Uterus (tissue), 4 donors: ENCODE measurements at regions of chr17 and their contacts with region 1.

Region 1: DNA sequence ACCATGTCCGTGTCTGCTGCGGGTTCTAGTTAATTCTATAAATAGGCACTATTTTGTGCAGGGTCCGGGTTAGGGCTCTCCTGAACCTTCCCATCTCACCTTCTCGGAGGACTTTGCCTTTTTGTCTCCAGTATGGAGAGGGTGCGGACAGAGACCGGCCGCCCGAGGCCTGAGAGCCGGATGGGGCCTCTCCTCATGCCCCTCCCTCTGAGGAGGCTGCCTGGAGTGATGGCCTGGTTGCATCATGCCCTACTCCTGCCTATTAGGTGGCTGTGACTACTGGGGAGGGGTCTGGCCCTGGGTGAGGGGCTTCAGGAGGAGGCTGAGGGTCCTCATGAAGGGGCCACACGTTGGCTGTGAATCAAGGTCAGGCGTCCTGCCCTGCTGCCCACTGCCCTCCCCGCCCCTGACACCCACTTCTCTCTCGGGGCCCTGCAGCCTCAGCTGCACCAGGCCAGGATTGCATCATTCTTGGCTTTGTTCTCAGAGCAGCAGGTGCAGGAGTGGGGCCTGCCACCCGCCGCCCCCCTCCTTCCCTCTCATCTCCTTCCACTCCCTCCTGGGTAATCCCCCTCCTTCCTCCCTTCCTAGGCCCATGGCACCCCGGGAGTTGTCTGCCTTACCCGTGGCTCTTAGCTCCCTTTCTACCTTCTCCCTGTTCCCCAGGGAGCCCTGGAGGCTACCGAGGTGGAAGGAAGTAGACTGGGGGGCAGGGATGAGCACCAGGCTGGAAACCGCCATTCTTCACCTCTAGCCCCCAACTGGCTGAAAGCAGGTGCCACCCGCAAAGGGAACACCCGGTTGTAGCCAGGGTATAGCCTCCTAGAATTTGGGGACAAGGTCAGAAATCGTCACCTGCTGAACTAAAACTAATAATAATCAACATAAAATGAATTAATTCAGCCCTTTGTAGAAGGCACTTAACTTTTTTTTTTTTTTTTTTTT is 12.7 kb upstream of the ARHGAP23 start:
- DNase-seq: no peak
- H3K4me3 ChIP-seq: no peak overlapping the region
- H3K27ac ChIP-seq: no peak overlapping the region
- H3K4me1 ChIP-seq: peaks cover 0 to 8% of the 10 kb centered on the region in 2 donors
- H3K27me3 ChIP-seq: no peaks in the 10 kb centered on the region
- CTCF ChIP-seq: no peak
- POLR2A ChIP-seq: no peak

Region 2: GRCh38 chr17:38349097-38349730 is 66.3 kb before region 1 on chr17:
- intact Hi-C with region 1: loop called (anchors 5 kb)
- DNase-seq: peak; percentile 86 to 89
- H3K4me3 ChIP-seq: no peak overlapping the region
- H3K27ac ChIP-seq: no peak overlapping the region
- H3K4me1 ChIP-seq: no peaks in the 10 kb centered on the region
- H3K27me3 ChIP-seq: no peaks in the 10 kb centered on the region
- CTCF ChIP-seq: peak; percentile 91 to 92 (median 92)
- POLR2A ChIP-seq: no peak